ENCODE measurements at regions of chr1 and their contacts with region 1.

Region 1: DNA sequence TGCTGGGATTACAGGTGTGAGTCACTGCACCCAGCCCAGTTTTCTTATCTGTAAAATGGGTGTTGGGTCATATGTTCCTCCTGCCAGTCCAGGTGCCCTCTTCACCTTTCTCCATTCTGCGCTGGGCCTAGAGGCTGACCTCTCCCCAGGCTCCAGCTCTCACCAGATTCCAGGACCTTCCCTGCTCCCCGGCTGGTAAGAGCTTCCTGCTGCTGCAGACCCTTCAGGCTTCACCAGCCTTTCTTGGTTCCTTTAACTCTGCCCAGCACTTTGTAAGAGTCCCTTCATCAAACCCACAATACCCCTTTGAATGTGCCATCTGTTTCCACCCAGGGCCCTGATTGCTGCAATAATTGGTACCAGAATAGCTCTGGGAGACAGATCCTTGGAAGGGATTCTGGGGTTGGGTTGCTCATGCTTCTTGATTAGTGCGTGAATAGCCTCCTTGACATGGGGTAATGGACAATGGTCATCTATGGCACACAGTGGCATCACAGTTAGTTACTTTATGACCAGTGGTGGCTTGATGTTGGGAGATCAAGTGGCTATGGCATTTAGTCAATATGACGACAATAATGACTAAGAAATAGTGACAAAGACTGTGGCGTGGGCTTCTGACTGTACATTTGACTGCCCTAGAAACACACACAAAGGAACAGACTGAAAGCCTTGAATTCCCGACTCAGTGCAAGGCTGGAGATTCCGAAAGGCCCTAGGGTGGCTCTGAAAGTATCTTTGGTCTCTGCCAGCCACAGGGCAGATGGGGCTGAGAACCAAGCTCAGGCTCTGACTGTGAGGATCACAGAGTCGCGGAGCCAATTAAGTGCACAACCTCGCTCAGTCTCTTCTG is 67.3 kb downstream of the SLC9A1 start:
- DNase-seq: no peak
- H3K4me3 ChIP-seq: no peak overlapping the region
- H3K27ac ChIP-seq: no peak overlapping the region
- H3K4me1 ChIP-seq: peaks cover 10% of the 10 kb centered on the region
- H3K27me3 ChIP-seq: peaks cover 1% of the 10 kb centered on the region
- CTCF ChIP-seq: no peak

Region 2: DNA sequence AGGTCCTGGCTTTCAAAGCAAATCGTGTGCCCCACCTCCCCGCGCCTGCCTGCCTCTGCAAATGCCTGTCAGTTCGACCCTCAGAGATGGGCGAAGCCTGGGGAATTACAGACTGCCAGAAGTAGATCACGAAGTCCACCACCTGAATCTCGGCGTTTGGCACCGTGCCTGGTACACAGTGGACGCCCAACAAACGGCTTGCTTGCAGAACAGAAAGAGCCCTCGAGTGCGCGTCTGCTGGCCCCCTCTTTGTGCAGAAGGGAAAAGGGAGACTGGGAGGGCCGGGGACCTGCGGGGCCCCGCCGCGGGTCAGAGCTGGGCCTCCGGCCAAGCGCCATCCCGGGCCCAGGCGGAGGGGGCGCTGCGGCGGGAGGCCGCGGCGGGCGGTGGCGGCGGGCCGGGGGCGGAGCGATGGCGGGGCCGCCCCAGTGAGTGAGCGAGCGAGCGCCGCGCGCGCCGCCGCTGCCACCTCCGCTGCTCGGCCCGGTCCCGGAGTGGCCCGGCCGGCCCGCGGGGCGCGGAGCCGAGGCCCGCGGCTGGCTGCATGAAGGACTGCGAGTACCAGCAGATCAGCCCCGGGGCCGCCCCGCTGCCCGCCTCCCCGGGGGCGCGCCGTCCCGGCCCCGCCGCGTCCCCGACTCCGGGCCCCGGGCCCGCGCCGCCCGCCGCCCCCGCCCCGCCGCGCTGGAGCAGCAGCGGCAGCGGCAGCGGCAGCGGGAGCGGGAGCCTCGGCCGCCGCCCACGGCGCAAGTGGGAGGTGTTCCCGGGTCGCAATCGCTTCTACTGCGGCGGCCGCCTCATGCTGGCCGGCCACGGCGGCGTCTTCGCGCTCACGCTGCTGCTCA is 261.1 kb before region 1 on chr1 and contains the start of gene ZDHHC18:
- CTCF ChIA-PET with region 1: no interaction called
- dilution Hi-C with region 1: no loop called
- in situ Hi-C with region 1: no loop called
- intact Hi-C with region 1: no loop called
- DNase-seq: peak; percentile 41
- H3K4me3 ChIP-seq: peak within 1 kb of the TSS; percentile 51 to 68 (median 54)
- H3K27ac ChIP-seq: peak within 1 kb of the TSS; percentile 34
- H3K4me1 ChIP-seq: peaks cover 12% of the 10 kb centered on the region
- H3K27me3 ChIP-seq: no peaks in the 10 kb centered on the region
- CTCF ChIP-seq: peak; percentile 42 to 49
- total RNA-seq, gene ZDHHC18: 14.2 to 20.2 TPM

Region 3: DNA sequence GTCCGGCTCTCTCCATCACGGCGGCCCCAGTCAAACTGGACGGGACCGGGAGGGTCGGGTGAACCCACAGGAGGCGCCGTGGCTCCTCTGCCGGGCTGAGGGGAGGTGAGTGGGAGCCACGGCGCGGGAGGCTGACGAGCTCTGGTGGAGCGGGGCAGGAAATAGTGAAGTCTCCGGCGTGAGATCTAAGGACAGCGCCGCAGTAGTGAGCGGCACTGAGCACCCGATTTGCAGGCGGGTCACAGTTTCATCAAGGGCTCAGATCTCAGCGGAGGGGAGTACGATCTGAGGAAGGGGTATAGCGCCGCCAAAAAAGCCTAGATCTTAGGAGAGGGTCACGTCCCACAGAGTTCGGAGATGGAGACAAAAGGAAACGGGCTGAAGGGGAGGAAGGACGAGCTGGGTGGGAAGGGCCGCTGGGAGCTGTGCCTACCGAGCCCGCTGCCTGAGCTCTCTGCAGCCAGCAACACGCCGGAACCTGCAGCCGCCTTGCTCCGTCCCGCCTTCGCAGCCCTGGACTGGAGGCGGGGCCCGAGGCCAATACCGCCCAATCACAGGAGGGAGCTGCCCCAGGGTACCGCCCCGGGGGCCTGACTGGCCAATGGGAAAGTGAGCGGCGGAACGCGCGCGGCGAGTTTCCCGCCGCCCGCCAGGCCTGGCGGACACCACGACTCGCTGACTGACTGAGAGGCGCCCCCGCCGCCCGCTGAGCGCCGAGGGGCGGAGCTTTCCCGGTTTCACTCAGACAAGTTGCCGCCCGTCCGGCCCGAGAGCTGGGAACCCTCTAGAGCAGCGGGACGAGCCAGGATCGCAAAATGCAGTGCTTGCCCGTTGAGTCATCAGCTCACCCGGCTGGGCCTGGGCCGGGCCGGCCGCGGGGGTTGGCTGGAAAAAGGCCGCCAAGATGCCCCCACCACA is 222.7 kb before region 1 on chr1:
- CTCF ChIA-PET with region 1: no interaction called
- dilution Hi-C with region 1: no loop called
- in situ Hi-C with region 1: no loop called
- intact Hi-C with region 1: no loop called
- DNase-seq: peak; percentile 98
- H3K4me3 ChIP-seq: peak overlapping the region; percentile 53 to 99 (median 82)
- H3K27ac ChIP-seq: peak overlapping the region; percentile 98
- H3K4me1 ChIP-seq: peaks cover 36% of the 10 kb centered on the region
- H3K27me3 ChIP-seq: no peaks in the 10 kb centered on the region
- CTCF ChIP-seq: peak in 1 of 2 donors; percentile 1

Region 4: DNA sequence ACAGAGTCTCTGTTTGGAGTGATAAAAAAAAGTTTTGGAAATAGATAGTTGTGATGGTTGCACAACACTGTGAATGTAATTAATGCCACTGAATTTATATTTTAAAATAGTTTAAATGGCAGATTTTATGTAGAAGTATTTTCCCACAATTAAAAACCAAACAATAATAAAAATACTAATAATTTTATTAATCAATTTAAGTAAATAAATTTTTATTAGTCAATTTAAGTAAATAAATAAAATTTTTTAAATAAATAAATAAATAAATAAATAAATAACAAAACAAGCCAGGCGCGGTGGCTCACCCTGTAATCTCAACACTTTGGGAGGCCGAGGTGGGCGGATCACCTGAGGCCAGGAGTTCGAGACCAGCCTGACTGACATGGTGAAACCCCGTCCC is 122.4 kb before region 1 on chr1:
- CTCF ChIA-PET with region 1: no interaction called
- dilution Hi-C with region 1: loop called (anchors 5 kb)
- in situ Hi-C with region 1: no loop called
- intact Hi-C with region 1: no loop called
- DNase-seq: no peak
- H3K4me3 ChIP-seq: no peak overlapping the region
- H3K27ac ChIP-seq: no peak overlapping the region
- H3K4me1 ChIP-seq: peaks cover 24% of the 10 kb centered on the region
- H3K27me3 ChIP-seq: no peaks in the 10 kb centered on the region
- CTCF ChIP-seq: no peak

Region 5: GRCh38 chr1:27037515-27037914 is 50.1 kb before region 1 on chr1:
- CTCF ChIA-PET with region 1: no interaction called
- dilution Hi-C with region 1: loop called (anchors 5 kb)
- in situ Hi-C with region 1: no loop called
- intact Hi-C with region 1: no loop called
- DNase-seq: no peak
- H3K4me3 ChIP-seq: no peak overlapping the region
- H3K27ac ChIP-seq: no peak overlapping the region
- H3K4me1 ChIP-seq: peaks cover 11% of the 10 kb centered on the region
- H3K27me3 ChIP-seq: no peaks in the 10 kb centered on the region
- CTCF ChIP-seq: no peak

Region 6: DNA sequence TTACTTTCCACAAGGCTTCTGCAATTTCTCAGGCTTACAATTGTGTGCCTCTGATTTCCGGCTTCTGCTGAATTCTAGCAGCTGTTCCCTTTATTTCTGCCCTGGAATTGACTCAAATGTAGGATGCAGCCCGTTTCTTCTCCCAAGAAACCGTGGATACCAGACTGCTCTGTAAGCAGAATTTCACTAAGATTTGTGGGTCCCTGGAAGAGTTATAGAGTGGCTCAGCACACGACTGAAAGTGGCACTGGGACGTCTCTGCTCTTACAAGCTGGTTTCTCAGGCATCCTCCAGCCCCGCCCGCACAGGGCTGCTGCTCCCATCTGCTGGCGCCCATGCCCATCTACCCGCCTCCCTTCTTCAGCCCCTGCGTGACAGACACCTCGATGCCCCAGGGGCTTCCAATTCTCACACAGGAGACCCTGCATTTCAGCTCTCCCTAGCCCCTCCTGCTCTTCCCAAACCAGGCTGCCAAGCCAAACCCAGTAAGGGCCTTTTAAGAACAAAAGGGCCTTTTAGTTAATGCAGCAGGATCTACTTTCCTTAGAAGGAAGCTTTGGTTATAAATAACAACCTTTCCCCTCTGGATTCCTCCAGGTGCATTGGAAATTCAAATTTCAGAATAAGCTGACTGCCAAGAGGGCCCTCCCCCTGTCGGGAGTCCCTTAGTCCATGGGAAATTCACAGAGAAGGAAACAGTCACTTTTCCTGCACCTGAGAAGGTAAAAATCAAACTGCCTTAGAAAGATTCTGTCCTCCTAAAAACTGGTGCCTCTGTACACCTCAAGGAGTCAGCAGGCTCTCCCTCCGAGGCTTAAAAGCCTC is 29.6 kb before region 1 on chr1:
- CTCF ChIA-PET with region 1: no interaction called
- dilution Hi-C with region 1: loop called (anchors 5 kb)
- in situ Hi-C with region 1: no loop called
- intact Hi-C with region 1: no loop called
- DNase-seq: no peak
- H3K4me3 ChIP-seq: no peak overlapping the region
- H3K27ac ChIP-seq: no peak overlapping the region
- H3K4me1 ChIP-seq: peaks cover 5% of the 10 kb centered on the region
- H3K27me3 ChIP-seq: no peaks in the 10 kb centered on the region
- CTCF ChIP-seq: no peak

Region 7: DNA sequence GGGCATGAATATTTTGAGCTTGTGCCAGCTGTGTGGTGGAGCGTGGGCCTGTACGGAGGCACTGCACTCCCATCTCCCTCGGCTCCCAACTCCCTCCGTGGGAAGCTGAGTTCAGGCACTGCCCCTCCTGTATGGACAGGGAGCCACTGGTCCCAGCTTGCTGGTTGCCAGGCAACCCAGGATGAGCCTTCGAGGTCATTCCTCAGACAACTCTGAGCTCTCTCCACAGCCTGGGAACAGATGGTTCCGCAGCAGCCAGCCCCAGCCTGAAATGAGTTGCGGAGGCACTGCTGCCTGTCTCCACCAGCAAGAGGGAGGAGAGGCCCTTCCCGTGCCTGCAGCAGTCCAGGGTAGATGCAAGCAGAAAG is 16.6 kb before region 1 on chr1:
- CTCF ChIA-PET with region 1: interaction called, 3 read pairs
- dilution Hi-C with region 1: no loop called
- in situ Hi-C with region 1: no loop called
- intact Hi-C with region 1: loop called (anchors 1 kb)
- DNase-seq: peak; percentile 76
- H3K4me3 ChIP-seq: peak overlapping the region in 1 of 3 experiments; percentile 19
- H3K27ac ChIP-seq: no peak overlapping the region
- H3K4me1 ChIP-seq: peaks cover 15% of the 10 kb centered on the region
- H3K27me3 ChIP-seq: no peaks in the 10 kb centered on the region
- CTCF ChIP-seq: no peak

Region 8: GRCh38 chr1:27102707-27103491 is 15.3 kb after region 1 on chr1:
- CTCF ChIA-PET with region 1: no interaction called
- dilution Hi-C with region 1: no loop called
- in situ Hi-C with region 1: no loop called
- intact Hi-C with region 1: no loop called
- DNase-seq: peak; percentile 45
- H3K4me3 ChIP-seq: no peak overlapping the region
- H3K27ac ChIP-seq: no peak overlapping the region
- H3K4me1 ChIP-seq: peaks cover 40% of the 10 kb centered on the region
- H3K27me3 ChIP-seq: no peaks in the 10 kb centered on the region
- CTCF ChIP-seq: peak; percentile 82 to 94

Region 9: GRCh38 chr1:27235827-27236226 is 148.2 kb after region 1 on chr1:
- CTCF ChIA-PET with region 1: no interaction called
- dilution Hi-C with region 1: no loop called
- in situ Hi-C with region 1: no loop called
- intact Hi-C with region 1: no loop called
- DNase-seq: peak; percentile 32
- H3K4me3 ChIP-seq: peak overlapping the region; percentile 68 to 72 (median 71)
- H3K27ac ChIP-seq: peak overlapping the region; percentile 31
- H3K4me1 ChIP-seq: peaks cover 15% of the 10 kb centered on the region
- H3K27me3 ChIP-seq: no peaks in the 10 kb centered on the region
- CTCF ChIP-seq: no peak

Measured in mammary epithelial cell (primary cell).